ENCODE measurements at regions of chr10 and their contacts with region 1.

Region 1: DNA sequence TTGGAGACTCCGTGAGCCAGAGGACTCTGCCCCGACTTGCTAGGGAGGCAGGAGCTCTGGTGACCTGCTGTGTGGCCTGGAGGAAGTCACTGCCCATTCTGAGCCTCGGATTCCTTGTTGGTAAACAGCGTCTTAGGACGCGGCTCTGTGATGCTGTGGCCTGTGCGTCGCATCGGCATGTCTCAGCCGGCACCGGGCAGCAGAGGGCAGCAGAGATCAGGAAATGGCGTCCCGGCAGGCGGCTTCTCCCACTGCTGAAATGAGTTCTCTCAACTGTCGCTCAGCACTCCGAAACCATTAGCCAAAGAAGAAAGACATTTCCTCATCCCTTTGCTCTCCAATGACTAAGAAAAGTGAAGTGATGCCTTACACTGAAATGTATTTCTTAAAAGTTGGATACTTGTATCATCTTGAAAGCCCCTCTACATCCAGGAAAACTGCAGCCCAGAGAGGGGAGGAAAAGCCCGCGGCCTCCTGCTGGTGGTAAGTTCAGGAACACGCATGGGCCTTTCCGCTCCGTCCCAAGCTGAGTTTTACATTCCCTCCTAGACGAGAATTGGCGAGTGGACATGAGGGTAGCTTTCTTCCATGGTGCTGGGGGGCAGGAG is 91.7 kb downstream of the WDR11 start:
- DNase-seq: peak; percentile 33 to 57 (median 37)
- H3K4me3 ChIP-seq: no peak overlapping the region
- H3K4me3 Mint-ChIP-seq: peak overlapping the region; percentile 9 to 31
- H3K27ac ChIP-seq: no peak overlapping the region
- H3K27ac Mint-ChIP-seq: peak overlapping the region in 1 of 7 donors; percentile 31
- H3K4me1 ChIP-seq: peaks cover 0 to 2% of the 10 kb centered on the region in 2 donors
- H3K4me1 Mint-ChIP-seq: peaks cover 6% of the 10 kb centered on the region
- H3K27me3 ChIP-seq: peaks cover 0 to 7% of the 10 kb centered on the region in 2 donors
- H3K27me3 Mint-ChIP-seq: peaks cover 18 to 45% (median 28%) of the 10 kb centered on the region in 3 donors
- CTCF ChIP-seq: peak; percentile 87

Region 2: GRCh38 chr10:120917521-120918250 is 25.2 kb before region 1 on chr10:
- intact Hi-C with region 1: no loop called
- DNase-seq: no peak
- H3K4me3 ChIP-seq: no peak overlapping the region
- H3K4me3 Mint-ChIP-seq: no peak overlapping the region
- H3K27ac ChIP-seq: no peak overlapping the region
- H3K27ac Mint-ChIP-seq: peak overlapping the region in 1 of 7 donors; percentile 37
- H3K4me1 ChIP-seq: no peaks in the 10 kb centered on the region
- H3K4me1 Mint-ChIP-seq: no peaks in the 10 kb centered on the region
- H3K27me3 ChIP-seq: no peaks in the 10 kb centered on the region
- H3K27me3 Mint-ChIP-seq: peaks cover 0 to 3% (median 2%) of the 10 kb centered on the region in 3 donors
- CTCF ChIP-seq: no peak

Region 3: GRCh38 chr10:121608469-121609190 is 665.7 kb after region 1 on chr10:
- intact Hi-C with region 1: loop called in 1 of 2 experiments (anchors 10 kb)
- DNase-seq: no peak
- H3K4me3 ChIP-seq: no peak overlapping the region
- H3K4me3 Mint-ChIP-seq: peak overlapping the region in 1 of 2 donors; percentile 35
- H3K27ac ChIP-seq: no peak overlapping the region
- H3K27ac Mint-ChIP-seq: no peak overlapping the region
- H3K4me1 ChIP-seq: no peaks in the 10 kb centered on the region
- H3K4me1 Mint-ChIP-seq: peaks cover 2% of the 10 kb centered on the region
- H3K27me3 ChIP-seq: peaks cover 7 to 28% of the 10 kb centered on the region in 2 donors
- H3K27me3 Mint-ChIP-seq: peaks cover 18 to 44% (median 20%) of the 10 kb centered on the region in 3 donors
- CTCF ChIP-seq: peak; percentile 72

Region 4: GRCh38 chr10:121734589-121735045 is 791.7 kb after region 1 on chr10:
- intact Hi-C with region 1: loop called (anchors 2 to 5 kb)
- DNase-seq: peak in 1 of 3 donors; percentile 15
- H3K4me3 ChIP-seq: no peak overlapping the region
- H3K4me3 Mint-ChIP-seq: peak overlapping the region in 1 of 2 donors; percentile 79
- H3K27ac ChIP-seq: no peak overlapping the region
- H3K27ac Mint-ChIP-seq: peak overlapping the region in 1 of 7 donors; percentile 45
- H3K4me1 ChIP-seq: peaks cover 12 to 26% of the 10 kb centered on the region in 2 donors
- H3K4me1 Mint-ChIP-seq: peaks cover 28% of the 10 kb centered on the region
- H3K27me3 ChIP-seq: peaks cover 39 to 42% of the 10 kb centered on the region in 2 donors
- H3K27me3 Mint-ChIP-seq: peaks cover 41 to 69% (median 66%) of the 10 kb centered on the region in 3 donors
- CTCF ChIP-seq: peak; percentile 83

Region 5: GRCh38 chr10:121900443-121901174 is 957.7 kb after region 1 on chr10:
- intact Hi-C with region 1: loop called (anchors 5 kb)
- DNase-seq: peak; percentile 11 to 42 (median 21)
- H3K4me3 ChIP-seq: no peak overlapping the region
- H3K4me3 Mint-ChIP-seq: no peak overlapping the region
- H3K27ac ChIP-seq: no peak overlapping the region
- H3K27ac Mint-ChIP-seq: no peak overlapping the region
- H3K4me1 ChIP-seq: no peaks in the 10 kb centered on the region
- H3K4me1 Mint-ChIP-seq: no peaks in the 10 kb centered on the region
- H3K27me3 ChIP-seq: no peaks in the 10 kb centered on the region
- H3K27me3 Mint-ChIP-seq: no peaks in the 10 kb centered on the region
- CTCF ChIP-seq: peak; percentile 88

Measured in CD14-positive monocyte (primary cell).